ENCODE measurements at regions of chr5 and their contacts with region 1.

Region 1: DNA sequence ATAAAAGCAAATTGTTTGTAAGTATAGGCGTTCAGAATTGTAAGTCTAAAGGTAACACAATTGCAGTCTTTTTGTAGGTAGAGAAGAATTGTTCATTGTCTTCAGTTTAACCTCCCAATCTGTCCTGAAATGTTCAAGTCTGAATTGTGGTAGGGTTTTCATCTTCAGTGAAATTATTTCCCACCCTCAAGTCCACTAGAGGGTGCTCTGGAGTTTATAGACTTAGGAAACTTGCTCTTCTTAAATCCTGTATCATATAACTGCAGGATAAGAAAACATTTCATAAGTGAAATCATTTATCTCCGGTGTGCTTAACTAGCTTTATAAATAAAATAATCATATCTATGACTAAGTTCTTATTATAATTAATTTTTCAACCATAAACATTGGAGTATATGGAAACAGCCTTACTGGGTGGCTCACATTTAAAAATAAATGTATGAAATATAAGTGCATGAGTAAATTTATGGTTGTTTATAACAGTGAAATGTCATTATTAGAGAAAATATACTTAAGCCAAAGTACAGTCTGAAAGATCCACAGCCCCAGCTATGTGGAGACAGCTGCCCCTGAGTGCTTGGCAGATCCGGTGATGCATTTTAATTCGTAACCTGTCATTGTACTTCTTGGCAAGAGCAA is 182.4 kb upstream of the OTULINL start:
- DNase-seq: no peak
- H3K4me3 ChIP-seq: no peak overlapping the region
- H3K27ac ChIP-seq: peak overlapping the region in 2 of 4 donors; percentile 33 to 35
- H3K4me1 ChIP-seq: peaks cover 0 to 32% (median 8%) of the 10 kb centered on the region in 4 donors
- H3K27me3 ChIP-seq: no peaks in the 10 kb centered on the region
- CTCF ChIP-seq: peak; percentile 18 to 65 (median 56)
- EP300 ChIP-seq: no peak
- POLR2A ChIP-seq: no peak

Region 2: GRCh38 chr5:14644623-14645237 is 245.6 kb after region 1 on chr5:
- intact Hi-C with region 1: loop called (anchors 5 kb)
- DNase-seq: no peak
- H3K4me3 ChIP-seq: no peak overlapping the region
- H3K27ac ChIP-seq: no peak overlapping the region
- H3K4me1 ChIP-seq: no peaks in the 10 kb centered on the region
- H3K27me3 ChIP-seq: peaks cover 0 to 4% (median 0%) of the 10 kb centered on the region in 3 donors
- CTCF ChIP-seq: no peak
- EP300 ChIP-seq: no peak
- POLR2A ChIP-seq: no peak